ENCODE measurements at regions of chr6 and their contacts with region 1.

Region 1: DNA sequence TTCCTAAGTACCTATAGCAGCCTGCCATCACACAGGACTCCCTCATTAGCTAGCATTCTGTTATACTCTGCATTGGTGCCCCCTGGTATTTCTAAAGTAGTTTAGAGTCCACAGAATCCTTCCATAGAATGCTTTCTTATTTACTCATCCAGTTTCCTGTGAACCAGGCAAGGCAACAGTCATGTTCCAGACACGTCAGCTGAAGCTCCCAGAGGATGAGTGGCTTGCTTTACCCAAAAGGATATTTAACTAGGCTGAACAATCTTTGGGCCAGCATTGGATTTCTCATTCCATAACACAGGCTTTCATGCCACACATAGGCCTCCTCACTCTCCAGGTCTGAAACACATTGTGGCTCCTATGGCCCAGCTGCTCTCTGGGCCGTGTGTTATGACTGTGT is 203.8 kb upstream of the MAP3K7 start:
- DNase-seq: no peak
- ATAC-seq: no peak
- H3K4me3 ChIP-seq: no peak overlapping the region
- H3K27ac ChIP-seq: no peak overlapping the region
- H3K4me1 ChIP-seq: no peaks in the 10 kb centered on the region
- H3K27me3 ChIP-seq: no peaks in the 10 kb centered on the region
- CTCF ChIP-seq: no peak

Region 2: DNA sequence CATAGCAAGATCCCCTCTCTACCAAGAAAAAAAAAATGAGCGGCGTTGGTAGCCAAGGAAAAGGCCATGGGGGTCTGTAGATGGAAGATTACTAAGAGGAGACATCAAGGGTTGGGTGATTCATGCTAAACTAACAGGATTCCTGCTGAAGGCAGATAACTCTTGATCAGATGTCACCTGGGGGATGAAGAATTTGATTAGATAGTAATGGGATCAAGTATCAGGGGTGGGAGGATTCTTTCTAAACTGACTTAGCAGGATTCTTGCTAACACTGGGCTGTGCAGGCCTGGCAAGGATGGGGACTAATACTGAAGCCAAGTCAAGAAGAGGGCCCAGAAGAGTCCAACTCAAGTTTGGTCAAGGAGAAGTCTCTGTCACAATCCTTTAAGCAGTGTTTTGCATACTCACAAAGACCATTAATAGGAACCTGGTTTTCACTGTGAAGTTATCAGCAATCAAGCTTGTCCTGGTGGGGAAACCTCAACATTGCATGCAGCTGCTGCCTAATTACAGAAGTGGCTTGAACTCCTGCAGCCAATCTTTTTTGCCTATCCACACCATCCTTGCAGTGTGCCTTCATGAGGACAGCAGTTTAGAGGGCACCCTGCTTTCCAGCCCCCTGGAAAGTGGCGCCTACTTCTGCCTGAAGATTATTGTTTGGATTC is 1296.4 kb before region 1 on chr6:
- intact Hi-C with region 1: loop called in 1 of 10 experiments (anchors 5 kb)
- DNase-seq: no peak
- ATAC-seq: no peak
- H3K4me3 ChIP-seq: no peak overlapping the region
- H3K27ac ChIP-seq: no peak overlapping the region
- H3K4me1 ChIP-seq: peaks cover 0 to 8% (median 0%) of the 10 kb centered on the region in 9 donors
- H3K27me3 ChIP-seq: no peaks in the 10 kb centered on the region
- CTCF ChIP-seq: peak in 1 of 9 donors; percentile 7

Region 3: DNA sequence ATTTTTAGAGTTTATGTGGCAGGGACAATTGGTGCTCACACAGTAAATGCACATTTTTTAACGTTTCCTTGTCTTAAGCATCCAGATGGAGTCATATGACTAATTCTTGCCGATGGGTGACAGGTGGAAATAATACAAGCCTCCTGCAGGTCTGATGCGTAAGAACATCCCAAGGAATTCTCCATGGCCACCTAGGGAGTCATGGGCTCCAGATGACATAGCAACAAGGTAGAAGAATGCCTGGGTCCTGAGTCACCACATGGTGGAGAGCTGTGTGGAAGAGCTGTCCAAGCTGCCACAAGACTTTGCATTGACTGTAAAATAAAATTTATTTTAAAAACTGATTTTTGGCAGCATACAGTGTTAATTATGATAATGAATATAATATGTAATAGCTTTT is 126.8 kb before region 1 on chr6:
- intact Hi-C with region 1: no loop called
- DNase-seq: no peak
- ATAC-seq: no peak
- H3K4me3 ChIP-seq: no peak overlapping the region
- H3K27ac ChIP-seq: no peak overlapping the region
- H3K4me1 ChIP-seq: no peaks in the 10 kb centered on the region
- H3K27me3 ChIP-seq: peaks cover 0 to 3% (median 0%) of the 10 kb centered on the region in 7 donors
- CTCF ChIP-seq: no peak

Measured in heart right ventricle (tissue), 16 donors.